ENCODE measurements at regions of chr4 and their contacts with region 1.

Region 1: GRCh38 chr4:8854931-8855330 is 16.7 kb downstream of the HMX1 start:
- DNase-seq: no peak
- ATAC-seq: no peak
- H3K4me3 Mint-ChIP-seq: no peak overlapping the region
- H3K27ac Mint-ChIP-seq: no peak overlapping the region
- H3K4me1 Mint-ChIP-seq: peaks cover 30% of the 10 kb centered on the region
- H3K27me3 Mint-ChIP-seq: peaks cover 82% of the 10 kb centered on the region
- CTCF ChIP-seq: no peak

Region 2: DNA sequence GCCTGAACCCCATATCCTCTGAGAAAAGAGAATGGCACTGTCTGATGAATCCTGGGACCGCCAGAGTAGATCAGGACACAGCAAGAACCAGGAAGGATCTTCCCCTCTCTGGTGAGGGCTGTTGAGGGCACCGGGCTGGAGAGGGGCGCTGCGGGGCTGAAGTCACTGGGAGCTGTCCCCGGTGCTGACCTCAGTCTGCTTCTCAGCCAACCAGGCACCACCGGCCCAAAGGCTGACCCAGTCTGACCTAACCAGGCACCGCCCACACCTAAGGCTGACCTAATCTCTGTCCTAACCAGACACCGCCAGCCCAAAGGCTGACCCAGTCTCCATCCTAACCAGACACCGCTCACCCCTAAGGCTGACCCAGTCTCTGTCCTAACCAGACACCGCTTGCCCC is 179.5 kb before region 1 on chr4:
- CTCF ChIA-PET with region 1: interaction called, 10 read pairs
- POLR2A ChIA-PET with region 1: no interaction called
- DNase-seq: peak; percentile 89
- ATAC-seq: peak; percentile 99
- H3K4me3 Mint-ChIP-seq: no peak overlapping the region
- H3K27ac Mint-ChIP-seq: no peak overlapping the region
- H3K4me1 Mint-ChIP-seq: no peaks in the 10 kb centered on the region
- H3K27me3 Mint-ChIP-seq: peaks cover 14% of the 10 kb centered on the region
- CTCF ChIP-seq: no peak

Region 3: DNA sequence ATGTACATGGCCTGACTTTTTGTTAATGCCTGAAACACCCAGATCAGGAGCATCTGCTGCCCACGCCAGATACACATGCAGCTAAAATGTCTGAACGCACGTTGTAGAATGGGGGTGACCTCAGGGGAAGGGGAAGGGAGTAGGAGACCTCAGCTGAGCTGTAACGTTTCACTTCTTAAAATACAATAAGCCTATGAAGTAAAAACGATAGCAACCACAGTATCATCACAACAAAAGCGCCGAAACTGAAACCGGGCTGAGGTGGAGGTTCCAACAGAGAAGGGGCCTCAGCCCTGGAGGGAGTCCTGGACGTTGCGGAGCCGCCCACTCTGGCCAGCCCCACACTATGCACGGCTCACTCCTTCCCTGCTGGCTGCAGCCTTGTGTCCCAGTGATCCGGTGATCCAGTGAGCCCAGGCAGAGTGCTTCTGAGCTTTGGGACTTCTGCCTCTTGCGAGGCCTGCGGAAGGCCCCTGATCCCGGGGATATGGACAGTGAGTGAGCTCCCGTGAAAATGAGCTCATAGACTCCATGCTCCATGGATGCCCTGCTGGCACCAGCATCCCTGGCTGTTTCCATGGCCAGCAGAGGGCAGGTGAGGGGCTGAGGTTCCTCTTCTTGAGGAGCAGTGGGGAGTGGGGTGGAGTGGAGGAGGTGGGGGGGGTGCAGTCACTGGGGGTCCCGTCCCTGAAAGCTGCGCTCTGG is 35.3 kb before region 1 on chr4:
- CTCF ChIA-PET with region 1: interaction called, 25 read pairs
- POLR2A ChIA-PET with region 1: no interaction called
- DNase-seq: no peak
- ATAC-seq: peak; percentile 64
- H3K4me3 Mint-ChIP-seq: no peak overlapping the region
- H3K27ac Mint-ChIP-seq: no peak overlapping the region
- H3K4me1 Mint-ChIP-seq: no peaks in the 10 kb centered on the region
- H3K27me3 Mint-ChIP-seq: no peaks in the 10 kb centered on the region
- CTCF ChIP-seq: no peak

Region 4: GRCh38 chr4:8886612-8887406 is 31.9 kb after region 1 on chr4:
- CTCF ChIA-PET with region 1: interaction called, 14 read pairs
- POLR2A ChIA-PET with region 1: interaction called, 6 read pairs
- DNase-seq: no peak
- ATAC-seq: no peak
- H3K4me3 Mint-ChIP-seq: no peak overlapping the region
- H3K27ac Mint-ChIP-seq: no peak overlapping the region
- H3K4me1 Mint-ChIP-seq: peaks cover 19% of the 10 kb centered on the region
- H3K27me3 Mint-ChIP-seq: peaks cover 97% of the 10 kb centered on the region
- CTCF ChIP-seq: peak; percentile 60

Region 5: GRCh38 chr4:8910822-8911315 is 55.9 kb after region 1 on chr4:
- CTCF ChIA-PET with region 1: no interaction called
- POLR2A ChIA-PET with region 1: no interaction called
- DNase-seq: no peak
- ATAC-seq: no peak
- H3K4me3 Mint-ChIP-seq: no peak overlapping the region
- H3K27ac Mint-ChIP-seq: no peak overlapping the region
- H3K4me1 Mint-ChIP-seq: no peaks in the 10 kb centered on the region
- H3K27me3 Mint-ChIP-seq: no peaks in the 10 kb centered on the region; the same call in 1 of the 2 replicates
- CTCF ChIP-seq: no peak